ENCODE measurements at regions of chr4 and their contacts with region 1.

Region 1: GRCh38 chr4:48065587-48066052 is 49.0 kb downstream of the NIPAL1 start:
- DNase-seq: peak; percentile 40
- ATAC-seq: peak; percentile 93
- H3K4me3 ChIP-seq: no peak overlapping the region
- H3K27ac ChIP-seq: peak overlapping the region; percentile 24
- H3K4me1 ChIP-seq: peaks cover 26% of the 10 kb centered on the region
- H3K27me3 ChIP-seq: no peaks in the 10 kb centered on the region
- CTCF ChIP-seq: peak in 1 of 3 experiments; percentile 13; a peak in 1 of 6 replicates
- EP300 ChIP-seq: no peak
- POLR2A ChIP-seq: no peak
- RAD21 ChIP-seq: peak; percentile 57; the same call in 1 of the 2 replicates

Region 2: GRCh38 chr4:48047421-48047844 is 18.2 kb before region 1 on chr4:
- CTCF ChIA-PET with region 1: interaction called, 5 read pairs
- POLR2A ChIA-PET with region 1: interaction called, 7 read pairs
- RAD21 ChIA-PET with region 1: interaction called, 14 read pairs
- SMC1A ChIA-PET with region 1: interaction called, 10 read pairs
- in situ Hi-C with region 1: no loop called
- intact Hi-C with region 1: loop called (anchors 1 kb)
- DNase-seq: peak; percentile 84
- ATAC-seq: peak; percentile 95
- H3K4me3 ChIP-seq: peak overlapping the region; percentile 18; the same call in 1 of the 2 replicates
- H3K27ac ChIP-seq: peak overlapping the region; percentile 71
- H3K4me1 ChIP-seq: peaks cover 72% of the 10 kb centered on the region
- H3K27me3 ChIP-seq: no peaks in the 10 kb centered on the region; a peak in 1 of 4 replicates
- CTCF ChIP-seq: no peak
- EP300 ChIP-seq: peak; percentile 94 to 98
- POLR2A ChIP-seq: no peak
- RAD21 ChIP-seq: peak; percentile 36; the same call in 1 of the 2 replicates

Measured in GM12878 (cell line).